Left lung (tissue), 14 donors: ENCODE measurements at regions of chr9 and their contacts with region 1.

Region 1: GRCh38 chr9:129884220-129885017 is 49.2 kb downstream of the USP20 start:
- DNase-seq: peak; percentile 61 to 99 (median 92)
- ATAC-seq: peak; percentile 84
- H3K4me3 ChIP-seq: peak overlapping the region; percentile 14 to 48
- H3K27ac ChIP-seq: peak overlapping the region; percentile 75 to 96
- H3K4me1 ChIP-seq: peaks cover 5 to 57% of the 10 kb centered on the region in 2 donors
- H3K27me3 ChIP-seq: no peaks in the 10 kb centered on the region
- CTCF ChIP-seq: no peak

Region 2: GRCh38 chr9:129783516-129784361 is 100.7 kb before region 1 on chr9:
- intact Hi-C with region 1: no loop called
- DNase-seq: peak; percentile 56 to 79 (median 74)
- ATAC-seq: peak; percentile 100
- H3K4me3 ChIP-seq: no peak overlapping the region
- H3K27ac ChIP-seq: no peak overlapping the region
- H3K4me1 ChIP-seq: peaks cover 0 to 17% of the 10 kb centered on the region in 2 donors
- H3K27me3 ChIP-seq: peaks cover 0 to 22% of the 10 kb centered on the region in 2 donors
- CTCF ChIP-seq: peak; percentile 86 to 95

Region 3: DNA sequence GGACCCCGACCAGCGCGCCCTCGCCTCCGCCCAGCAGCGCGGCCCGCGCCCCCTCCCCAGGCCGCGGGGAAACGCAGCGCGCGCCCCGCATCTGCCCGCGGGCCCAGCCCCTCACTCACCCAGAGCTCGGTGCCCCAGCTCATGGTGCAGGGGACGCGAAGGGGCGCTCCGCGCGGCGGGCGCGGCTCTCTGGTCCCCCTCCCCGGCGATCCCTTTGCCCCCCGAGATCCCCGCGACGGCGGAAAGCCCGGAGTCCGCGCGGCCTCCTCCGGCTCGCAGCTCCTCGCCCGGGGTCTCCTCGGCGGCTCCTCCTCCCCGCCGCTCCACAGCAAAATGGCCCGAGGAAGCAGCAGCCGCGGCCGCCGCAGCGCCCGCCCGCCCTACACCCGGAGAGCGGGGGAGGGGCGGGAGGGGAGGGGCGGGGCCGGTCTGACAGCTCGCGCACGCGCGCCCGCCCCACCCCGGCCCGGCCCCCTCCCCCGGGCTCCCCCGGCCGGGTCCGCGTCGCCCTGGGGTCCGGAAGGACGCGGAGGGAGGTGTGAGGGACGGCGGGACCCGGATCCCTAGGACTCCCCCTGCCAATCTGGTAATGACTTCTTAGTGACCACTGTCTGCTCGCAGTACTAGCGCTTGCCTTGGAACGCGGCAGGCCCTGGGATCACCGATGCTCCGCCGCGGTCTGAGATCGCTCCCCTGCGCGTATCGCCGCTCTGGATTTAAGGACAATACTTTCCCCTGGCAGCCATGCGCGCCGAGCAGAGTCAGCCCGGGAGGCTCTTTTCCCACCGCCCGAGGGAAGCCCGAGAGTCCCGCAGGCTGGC is 158.6 kb after region 1 on chr9 and contains the start of gene FNBP1:
- intact Hi-C with region 1: loop called in 1 of 2 experiments (anchors 10 kb)
- DNase-seq: peak; percentile 79 to 94 (median 86)
- ATAC-seq: peak; percentile 94
- H3K4me3 ChIP-seq: peak within 1 kb of the TSS; percentile 67 to 85
- H3K27ac ChIP-seq: peak within 1 kb of the TSS; percentile 93 to 94
- H3K4me1 ChIP-seq: peaks cover 6 to 70% of the 10 kb centered on the region in 2 donors
- H3K27me3 ChIP-seq: no peaks in the 10 kb centered on the region
- CTCF ChIP-seq: no peak
- polyA plus RNA-seq, gene FNBP1: 33.3 to 40.5 (median 34.4) TPM